ENCODE measurements at regions of chr4 and their contacts with region 1.

Region 1: GRCh38 chr4:183407128-183407585 is 37.3 kb upstream of the CDKN2AIP start:
- DNase-seq: peak; percentile 69 to 88 (median 82)
- H3K4me3 ChIP-seq: peak overlapping the region in 3 of 4 donors; percentile 18 to 53 (median 28)
- H3K27ac ChIP-seq: peak overlapping the region in 2 of 5 donors; percentile 38 to 48
- H3K4me1 ChIP-seq: no peaks in the 10 kb centered on the region
- H3K27me3 ChIP-seq: no peaks in the 10 kb centered on the region
- CTCF ChIP-seq: peak; percentile 57 to 95 (median 78)
- POLR2A ChIP-seq: no peak

Region 2: GRCh38 chr4:183074296-183074990 is 332.7 kb before region 1 on chr4:
- intact Hi-C with region 1: loop called in 1 of 2 experiments (anchors 10 kb)
- DNase-seq: no peak
- H3K4me3 ChIP-seq: no peak overlapping the region
- H3K27ac ChIP-seq: no peak overlapping the region
- H3K4me1 ChIP-seq: no peaks in the 10 kb centered on the region
- H3K27me3 ChIP-seq: no peaks in the 10 kb centered on the region
- CTCF ChIP-seq: no peak
- POLR2A ChIP-seq: no peak

Region 3: DNA sequence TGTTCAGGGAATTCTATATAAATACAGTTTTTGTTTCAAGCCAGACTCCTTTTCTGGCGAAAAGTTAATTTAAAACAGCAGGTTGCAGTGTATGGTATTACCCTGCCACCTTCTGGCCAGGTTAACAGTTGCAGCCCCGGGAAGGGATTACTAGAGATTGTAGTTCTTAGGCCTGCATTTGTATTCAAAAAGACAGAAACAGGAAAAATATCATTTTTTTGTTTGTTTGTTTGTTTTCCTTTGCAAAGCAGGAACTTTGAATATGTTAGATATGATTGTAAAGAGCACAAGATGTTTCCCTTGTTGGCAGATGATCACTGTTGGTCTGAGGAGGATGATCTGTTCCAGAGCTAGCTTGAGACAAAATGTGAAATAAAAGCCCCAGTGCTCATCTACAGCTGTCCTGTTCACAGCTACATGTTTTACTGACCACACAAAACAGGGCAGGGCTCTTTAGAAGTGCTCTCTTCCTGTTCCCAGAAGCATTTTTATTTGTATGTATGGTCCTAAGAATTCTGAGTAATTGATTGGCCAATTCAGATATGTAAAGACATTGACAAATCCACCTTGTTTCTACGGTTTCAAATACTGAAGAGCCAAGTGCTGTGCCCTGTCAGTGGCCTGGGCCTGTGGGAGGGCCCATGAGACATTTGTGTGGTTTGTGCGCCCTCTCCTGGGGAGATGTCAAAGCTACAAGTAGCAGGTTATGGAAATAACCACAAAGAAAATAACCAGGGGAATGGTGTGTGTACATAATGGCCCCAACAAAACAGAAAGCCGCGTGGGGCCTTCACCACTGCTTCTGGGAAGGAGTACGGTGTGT is 145.0 kb before region 1 on chr4:
- intact Hi-C with region 1: loop called in 1 of 2 experiments (anchors 10 kb)
- DNase-seq: peak; percentile 70 to 94 (median 83)
- H3K4me3 ChIP-seq: no peak overlapping the region
- H3K27ac ChIP-seq: peak overlapping the region in 3 of 5 donors; percentile 13 to 52 (median 24)
- H3K4me1 ChIP-seq: no peaks in the 10 kb centered on the region
- H3K27me3 ChIP-seq: no peaks in the 10 kb centered on the region
- CTCF ChIP-seq: peak; percentile 70 to 87 (median 71)
- POLR2A ChIP-seq: no peak

Region 4: GRCh38 chr4:184074989-184075388 is 667.8 kb after region 1 on chr4:
- intact Hi-C with region 1: loop called in 1 of 2 experiments (anchors 10 kb)
- DNase-seq: no peak
- H3K4me3 ChIP-seq: no peak overlapping the region
- H3K27ac ChIP-seq: no peak overlapping the region
- H3K4me1 ChIP-seq: no peaks in the 10 kb centered on the region
- H3K27me3 ChIP-seq: no peaks in the 10 kb centered on the region
- CTCF ChIP-seq: no peak
- POLR2A ChIP-seq: no peak

Measured in adrenal gland (tissue), 19 donors.